CD4-positive, alpha-beta T cell (primary cell): ENCODE measurements at regions of chr19 and their contacts with region 1.

Region 1: GRCh38 chr19:47296036-47296435 is 13.6 kb upstream of the C5AR1 start:
- DNase-seq: peak; percentile 47 to 90 (median 70)
- ATAC-seq: peak; percentile 94
- H3K4me3 ChIP-seq: no peak overlapping the region
- H3K4me3 Mint-ChIP-seq: no peak overlapping the region
- H3K27ac ChIP-seq: no peak overlapping the region
- H3K27ac Mint-ChIP-seq: no peak overlapping the region
- H3K4me1 ChIP-seq: peaks cover 8% of the 10 kb centered on the region
- H3K4me1 Mint-ChIP-seq: peaks cover 4% of the 10 kb centered on the region
- H3K27me3 ChIP-seq: no peaks in the 10 kb centered on the region
- H3K27me3 Mint-ChIP-seq: no peaks in the 10 kb centered on the region
- CTCF ChIP-seq: peak; percentile 80

Region 2: DNA sequence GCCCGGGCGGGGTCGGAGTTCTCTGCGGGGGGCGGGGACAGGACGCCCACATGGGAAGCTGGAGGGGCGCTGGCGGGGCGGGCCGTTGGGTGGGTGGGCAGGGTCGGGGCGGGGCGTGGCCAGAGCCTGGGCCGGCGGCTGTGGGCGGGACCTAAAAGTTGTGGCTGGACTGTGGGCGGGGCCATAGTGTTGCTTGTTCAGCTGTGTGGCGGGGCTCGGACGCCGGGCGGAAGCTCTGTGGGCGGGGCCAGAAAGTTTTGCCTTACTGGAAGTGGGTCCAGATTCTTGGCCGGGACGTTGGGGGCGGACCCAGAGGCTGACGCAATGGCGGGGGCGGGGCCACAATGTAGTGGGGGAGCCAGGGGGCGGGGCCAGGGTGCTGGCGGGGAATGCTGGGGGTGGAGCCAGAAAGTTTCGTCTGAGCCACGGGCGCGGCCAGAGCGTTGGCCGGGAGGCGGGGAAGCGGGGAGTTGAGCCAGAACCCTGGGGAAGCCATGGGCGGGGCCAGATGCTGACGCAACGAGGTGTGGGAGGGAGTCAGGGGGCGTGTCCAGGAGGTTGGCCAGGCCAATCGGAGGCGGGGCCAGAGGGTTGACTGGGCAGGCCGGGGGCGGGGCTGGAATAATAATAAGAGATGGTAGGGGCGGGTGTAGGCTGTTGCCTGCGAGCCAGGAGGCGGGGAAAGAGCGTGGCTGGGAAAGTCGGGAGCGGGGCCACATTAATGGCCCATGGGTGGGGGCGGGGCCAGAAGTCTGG is 39.2 kb before region 1 on chr19:
- CTCF ChIA-PET with region 1: no interaction called
- POLR2A ChIA-PET with region 1: no interaction called
- intact Hi-C with region 1: no loop called
- DNase-seq: peak; percentile 96 to 100 (median 98)
- ATAC-seq: peak; percentile 77
- H3K4me3 ChIP-seq: peak overlapping the region; percentile 72
- H3K4me3 Mint-ChIP-seq: peak overlapping the region; percentile 84
- H3K27ac ChIP-seq: peak overlapping the region; percentile 69 to 91
- H3K27ac Mint-ChIP-seq: peak overlapping the region; percentile 97
- H3K4me1 ChIP-seq: peaks cover 30% of the 10 kb centered on the region
- H3K4me1 Mint-ChIP-seq: peaks cover 39% of the 10 kb centered on the region
- H3K27me3 ChIP-seq: no peaks in the 10 kb centered on the region
- H3K27me3 Mint-ChIP-seq: no peaks in the 10 kb centered on the region
- CTCF ChIP-seq: no peak

Region 3: DNA sequence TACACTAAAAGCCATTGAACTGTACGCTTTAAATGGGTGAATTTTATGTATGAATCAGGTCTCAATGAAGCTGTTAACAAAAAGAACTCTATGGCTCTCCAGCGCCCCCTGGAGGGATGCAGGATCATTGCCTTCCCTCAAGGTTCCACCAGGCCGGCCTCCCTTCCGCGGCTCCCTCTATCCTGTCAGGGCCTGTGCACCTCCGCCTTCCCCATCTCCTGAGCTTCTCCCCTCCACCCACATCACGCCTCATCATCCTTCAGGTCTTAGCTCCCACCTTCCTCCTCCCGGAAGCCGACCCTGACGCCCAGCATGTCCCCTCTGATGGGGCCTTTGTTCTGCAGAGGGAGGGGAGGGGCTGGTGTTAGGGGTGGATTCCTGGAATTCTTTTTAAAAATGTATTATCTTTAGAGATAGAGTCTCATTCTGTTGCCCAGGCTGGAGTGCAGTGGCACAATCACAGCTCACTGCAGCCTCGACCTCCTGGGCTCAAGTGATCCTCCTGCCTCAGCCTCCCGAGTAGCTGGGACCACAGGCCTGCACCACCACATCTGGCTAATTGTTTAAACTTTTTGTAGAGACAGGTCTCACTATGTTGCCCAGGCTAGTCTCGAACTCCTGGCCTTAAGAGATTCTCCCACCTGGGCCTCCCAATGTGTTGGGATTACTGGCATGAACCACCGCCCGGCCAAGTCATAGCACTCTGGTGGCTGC is 95.6 kb after region 1 on chr19:
- CTCF ChIA-PET with region 1: interaction called, 19 read pairs
- POLR2A ChIA-PET with region 1: interaction called, 4 read pairs
- intact Hi-C with region 1: loop called (anchors 1 kb)
- DNase-seq: peak; percentile 63 to 88 (median 78)
- ATAC-seq: peak; percentile 90
- H3K4me3 ChIP-seq: no peak overlapping the region
- H3K4me3 Mint-ChIP-seq: no peak overlapping the region
- H3K27ac ChIP-seq: no peak overlapping the region
- H3K27ac Mint-ChIP-seq: no peak overlapping the region
- H3K4me1 ChIP-seq: peaks cover 7% of the 10 kb centered on the region
- H3K4me1 Mint-ChIP-seq: peaks cover 6% of the 10 kb centered on the region
- H3K27me3 ChIP-seq: peaks cover 0 to 2% of the 10 kb centered on the region in 2 experiments
- H3K27me3 Mint-ChIP-seq: peaks cover 19% of the 10 kb centered on the region
- CTCF ChIP-seq: peak; percentile 88

Region 4: GRCh38 chr19:47428177-47428894 is 132.3 kb after region 1 on chr19:
- CTCF ChIA-PET with region 1: no interaction called
- POLR2A ChIA-PET with region 1: no interaction called
- intact Hi-C with region 1: loop called (anchors 1 kb)
- DNase-seq: peak; percentile 50 to 96 (median 75)
- ATAC-seq: peak; percentile 91
- H3K4me3 ChIP-seq: peak overlapping the region; percentile 29
- H3K4me3 Mint-ChIP-seq: no peak overlapping the region
- H3K27ac ChIP-seq: no peak overlapping the region
- H3K27ac Mint-ChIP-seq: no peak overlapping the region
- H3K4me1 ChIP-seq: peaks cover 38% of the 10 kb centered on the region
- H3K4me1 Mint-ChIP-seq: peaks cover 13% of the 10 kb centered on the region
- H3K27me3 ChIP-seq: peaks cover 36 to 43% of the 10 kb centered on the region in 2 experiments
- H3K27me3 Mint-ChIP-seq: peaks cover 56% of the 10 kb centered on the region
- CTCF ChIP-seq: no peak

Region 5: GRCh38 chr19:47697863-47698609 is 402.0 kb after region 1 on chr19:
- CTCF ChIA-PET with region 1: no interaction called
- POLR2A ChIA-PET with region 1: no interaction called
- intact Hi-C with region 1: loop called in 1 of 2 experiments (anchors 1 kb)
- DNase-seq: peak; percentile 16 to 75 (median 42)
- ATAC-seq: peak; percentile 77
- H3K4me3 ChIP-seq: no peak overlapping the region
- H3K4me3 Mint-ChIP-seq: no peak overlapping the region
- H3K27ac ChIP-seq: no peak overlapping the region
- H3K27ac Mint-ChIP-seq: no peak overlapping the region
- H3K4me1 ChIP-seq: peaks cover 6% of the 10 kb centered on the region
- H3K4me1 Mint-ChIP-seq: peaks cover 4% of the 10 kb centered on the region
- H3K27me3 ChIP-seq: no peaks in the 10 kb centered on the region
- H3K27me3 Mint-ChIP-seq: no peaks in the 10 kb centered on the region
- CTCF ChIP-seq: peak; percentile 86

Region 6: DNA sequence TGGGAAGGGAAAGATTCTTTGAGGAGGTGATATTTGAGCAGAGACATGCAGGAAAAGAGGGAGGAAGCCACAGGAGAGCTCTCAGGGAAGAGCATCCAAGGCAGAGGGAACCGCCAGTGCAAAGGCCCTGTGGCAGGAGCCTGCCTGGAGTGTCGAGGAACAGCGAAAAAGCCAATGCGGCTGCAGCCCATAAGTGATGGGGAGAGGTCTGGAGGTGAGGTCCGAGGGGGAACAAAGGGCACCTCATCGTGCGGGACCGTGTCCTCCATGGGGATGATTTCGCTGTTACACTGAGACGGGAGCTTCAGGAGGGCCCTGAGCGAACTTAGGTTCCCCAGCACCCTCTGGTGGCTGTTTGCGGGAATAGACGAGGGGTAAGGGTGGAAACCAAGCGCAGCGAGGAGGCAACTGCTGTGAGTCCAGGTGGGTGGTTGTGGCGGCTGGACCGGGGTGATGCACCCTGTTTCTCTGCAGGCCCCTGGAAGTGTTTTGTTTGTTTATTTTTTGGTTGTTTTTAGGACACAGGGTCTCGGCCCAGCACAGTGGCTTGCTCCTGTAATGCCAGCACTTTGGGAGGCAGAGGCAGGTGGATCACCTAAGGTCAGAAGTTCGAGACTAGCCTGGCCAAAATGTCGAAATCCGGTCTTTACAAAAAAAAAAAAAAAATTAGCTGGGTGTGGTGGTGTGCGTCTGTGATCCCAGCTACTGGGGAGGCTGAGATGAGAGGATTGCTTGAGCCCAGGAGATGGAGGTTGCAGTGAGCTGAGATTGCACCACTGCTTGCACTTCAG is 411.3 kb after region 1 on chr19:
- CTCF ChIA-PET with region 1: no interaction called
- POLR2A ChIA-PET with region 1: no interaction called
- intact Hi-C with region 1: loop called (anchors 1 to 5 kb)
- DNase-seq: peak; percentile 57 to 85 (median 67)
- ATAC-seq: peak; percentile 93
- H3K4me3 ChIP-seq: no peak overlapping the region
- H3K4me3 Mint-ChIP-seq: no peak overlapping the region
- H3K27ac ChIP-seq: no peak overlapping the region
- H3K27ac Mint-ChIP-seq: no peak overlapping the region
- H3K4me1 ChIP-seq: peaks cover 4% of the 10 kb centered on the region
- H3K4me1 Mint-ChIP-seq: peaks cover 4% of the 10 kb centered on the region
- H3K27me3 ChIP-seq: peaks cover 9 to 12% of the 10 kb centered on the region in 2 experiments
- H3K27me3 Mint-ChIP-seq: peaks cover 16% of the 10 kb centered on the region
- CTCF ChIP-seq: peak; percentile 82